Activated T-helper 2 cell treated with anti-CD3 and anti-CD28 coated beads, Interferon-gamma antibody, Interleukin-2, Interleukin-4, amounts not matched to agents 10 μg/mL and 5 μg/mL and 100 μg/mL, durations not matched to agents 14 hours and 24 hours and 36 hours (primary cell): ENCODE measurements at regions of chr3 and their contacts with region 1.

Region 1: GRCh38 chr3:6799264-6799915 is 61.5 kb upstream of the GRM7 start:
- DNase-seq: no peak
- H3K4me3 Mint-ChIP-seq: no peak overlapping the region
- H3K27ac Mint-ChIP-seq: no peak overlapping the region
- H3K4me1 Mint-ChIP-seq: no peaks in the 10 kb centered on the region
- H3K27me3 Mint-ChIP-seq: no peaks in the 10 kb centered on the region

Region 2: DNA sequence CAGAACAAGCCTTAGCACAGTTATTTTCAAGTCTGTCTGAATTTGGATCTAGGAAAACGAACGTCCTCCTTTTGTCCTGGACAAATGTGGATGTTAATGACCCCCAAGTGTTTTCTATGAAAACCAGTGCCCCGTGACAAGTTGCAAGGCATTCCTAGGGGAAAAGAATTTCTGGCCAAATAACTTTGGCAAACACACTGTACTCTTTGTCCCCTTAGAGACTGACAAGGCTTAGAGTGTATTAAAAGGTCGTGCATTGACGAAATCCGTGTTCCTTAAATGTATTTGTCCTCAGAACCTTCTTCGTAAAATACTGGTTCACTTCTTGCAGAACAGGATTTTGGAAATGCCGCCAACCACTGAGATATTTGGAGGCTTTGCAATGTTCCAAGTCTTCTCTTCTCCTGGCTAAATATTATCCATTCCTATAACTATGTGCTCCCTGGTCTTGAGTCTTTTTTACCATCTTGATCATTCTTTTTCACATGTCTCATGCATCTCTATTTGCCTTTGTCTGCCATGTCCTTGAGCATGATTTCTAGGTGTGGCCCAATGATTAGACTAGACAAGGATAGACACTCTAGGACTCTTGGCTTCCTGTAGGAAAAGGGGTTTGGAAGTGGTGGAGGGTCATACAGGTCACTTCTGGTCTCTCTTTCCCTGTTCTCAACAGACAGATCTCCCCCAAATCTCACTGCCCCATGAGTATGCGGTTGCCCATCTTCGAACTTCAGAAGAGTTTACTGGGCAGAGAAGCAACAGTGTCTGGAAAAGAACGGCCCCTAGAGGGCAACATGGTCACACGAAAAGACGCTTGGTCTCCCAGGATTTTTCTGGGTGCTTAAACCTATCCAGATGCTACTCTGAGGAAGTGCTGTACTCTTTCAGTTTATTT is 1494.4 kb before region 1 on chr3:
- intact Hi-C with region 1: loop called (anchors 5 kb)
- DNase-seq: no peak
- H3K4me3 Mint-ChIP-seq: no peak overlapping the region
- H3K27ac Mint-ChIP-seq: no peak overlapping the region
- H3K4me1 Mint-ChIP-seq: no peaks in the 10 kb centered on the region
- H3K27me3 Mint-ChIP-seq: peaks cover 4% of the 10 kb centered on the region

Region 3: DNA sequence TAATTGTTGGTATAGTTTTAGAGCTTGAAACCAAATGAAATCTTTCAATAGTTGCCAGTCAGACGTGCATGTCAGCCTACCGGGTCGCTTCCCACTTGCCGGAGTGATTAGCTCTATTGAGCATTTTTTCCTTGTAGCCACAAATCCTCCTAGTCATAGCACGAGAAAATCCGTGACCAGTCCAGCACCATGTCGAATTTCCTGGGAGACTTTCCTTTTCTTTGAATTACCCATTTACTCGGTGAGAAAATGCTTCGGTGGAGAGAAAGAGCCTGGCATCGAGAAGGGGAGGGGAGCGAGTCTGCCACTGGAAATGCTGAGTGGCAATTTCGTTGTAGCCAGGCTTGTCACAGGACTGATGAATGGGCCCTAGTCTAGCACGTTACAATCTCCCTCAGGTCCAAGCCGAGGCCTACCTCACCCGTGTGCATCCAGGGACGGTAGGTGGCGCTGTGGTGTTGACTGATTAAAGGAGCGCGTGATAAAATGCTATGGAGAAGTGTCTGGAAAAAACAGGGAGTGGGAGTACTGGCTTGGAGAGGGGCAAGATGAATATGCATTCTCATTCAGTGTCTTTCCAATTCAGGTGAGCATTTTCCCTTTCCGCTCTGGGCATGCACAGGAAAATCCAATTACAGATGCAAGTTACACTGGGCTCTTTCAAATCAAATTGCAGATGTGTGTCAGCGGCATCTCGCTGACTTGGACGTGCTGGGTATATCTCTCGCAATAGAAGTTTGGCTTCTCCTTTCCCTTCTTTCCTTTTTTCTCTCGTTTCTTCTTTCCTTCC is 1373.1 kb before region 1 on chr3:
- intact Hi-C with region 1: loop called (anchors 10 kb)
- DNase-seq: peak; percentile 28
- H3K4me3 Mint-ChIP-seq: no peak overlapping the region
- H3K27ac Mint-ChIP-seq: no peak overlapping the region
- H3K4me1 Mint-ChIP-seq: peaks cover 2% of the 10 kb centered on the region
- H3K27me3 Mint-ChIP-seq: peaks cover 7% of the 10 kb centered on the region